OCI-LY7 (cell line): ENCODE measurements at regions of chr20 and their contacts with region 1.

Region 1: DNA sequence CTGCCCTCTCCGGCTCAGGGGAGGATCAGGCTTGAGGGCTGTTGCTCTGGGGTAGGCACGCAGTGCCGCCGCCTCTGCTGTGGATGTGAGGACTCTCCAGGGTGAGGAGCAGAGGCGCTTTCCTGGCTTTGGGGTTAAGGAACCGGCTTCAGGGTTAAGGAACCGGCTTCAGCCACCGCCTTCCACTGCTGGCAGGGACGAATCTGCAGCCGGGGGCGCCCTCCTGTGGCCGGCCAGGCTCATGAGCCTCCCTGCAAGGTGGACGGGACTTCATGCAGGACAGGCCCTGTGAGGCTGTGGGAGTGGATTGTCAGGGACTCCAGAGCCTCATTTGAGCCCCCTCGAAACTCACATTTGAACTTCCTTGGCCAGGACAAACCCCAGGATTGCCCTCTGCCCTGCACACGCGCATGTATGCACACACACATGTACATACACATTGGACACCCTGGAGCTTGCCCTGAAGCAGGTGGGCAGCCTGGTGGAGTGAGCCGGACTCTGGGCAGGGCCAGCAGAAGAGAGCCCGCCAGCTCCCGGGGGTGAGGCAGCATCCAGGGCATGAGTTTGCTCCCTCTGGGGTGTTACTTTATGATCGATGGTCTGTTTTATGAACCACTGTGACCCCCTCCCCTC is 146.8 kb downstream of the PHACTR3 start:
- DNase-seq: peak; percentile 20
- H3K4me3 ChIP-seq: no peak overlapping the region
- H3K27ac ChIP-seq: no peak overlapping the region
- H3K4me1 ChIP-seq: peaks cover 16% of the 10 kb centered on the region
- CTCF ChIP-seq: peak; percentile 75

Region 2: DNA sequence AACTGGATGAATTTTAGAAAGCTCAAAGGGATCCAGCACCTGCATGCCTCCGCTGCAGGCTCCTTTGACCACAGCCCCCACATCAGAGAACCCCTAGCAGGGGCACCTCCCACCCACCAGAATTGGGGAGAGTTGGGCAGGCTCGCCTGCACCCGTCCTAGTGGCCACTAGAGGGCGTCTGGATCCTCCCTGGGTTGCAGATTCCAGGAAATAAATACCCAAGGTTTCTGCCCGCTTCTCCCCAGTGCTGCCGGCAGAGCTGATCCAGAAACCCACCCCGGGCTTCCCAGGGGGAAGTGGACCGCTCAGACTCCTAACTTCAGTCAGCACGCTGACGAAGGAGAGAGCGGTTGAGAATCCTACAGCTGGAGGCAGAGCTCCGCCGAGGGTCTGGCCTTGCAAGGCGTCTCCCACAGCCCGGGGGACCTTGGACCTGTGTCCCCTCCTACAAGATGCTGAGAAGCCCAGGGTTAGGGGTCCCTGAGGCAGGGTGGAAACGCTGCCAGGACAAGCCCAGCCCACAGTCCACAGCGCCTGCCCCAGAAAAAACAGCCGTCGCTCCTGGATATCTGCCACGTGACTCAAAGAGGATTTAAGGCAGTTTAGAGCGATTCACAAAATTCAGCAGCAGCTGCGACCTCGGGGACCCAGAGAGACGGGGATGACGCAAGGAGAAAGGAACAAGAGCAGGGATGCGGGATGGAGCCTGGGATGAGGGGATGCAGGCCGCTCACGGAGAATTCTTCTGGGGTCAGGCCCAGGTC is 179.4 kb before region 1 on chr20:
- CTCF ChIA-PET with region 1: no interaction called
- POLR2A ChIA-PET with region 1: no interaction called
- intact Hi-C with region 1: loop called (anchors 1 kb)
- DNase-seq: peak; percentile 56
- H3K4me3 ChIP-seq: no peak overlapping the region
- H3K27ac ChIP-seq: no peak overlapping the region
- H3K4me1 ChIP-seq: no peaks in the 10 kb centered on the region
- CTCF ChIP-seq: peak; percentile 97

Region 3: DNA sequence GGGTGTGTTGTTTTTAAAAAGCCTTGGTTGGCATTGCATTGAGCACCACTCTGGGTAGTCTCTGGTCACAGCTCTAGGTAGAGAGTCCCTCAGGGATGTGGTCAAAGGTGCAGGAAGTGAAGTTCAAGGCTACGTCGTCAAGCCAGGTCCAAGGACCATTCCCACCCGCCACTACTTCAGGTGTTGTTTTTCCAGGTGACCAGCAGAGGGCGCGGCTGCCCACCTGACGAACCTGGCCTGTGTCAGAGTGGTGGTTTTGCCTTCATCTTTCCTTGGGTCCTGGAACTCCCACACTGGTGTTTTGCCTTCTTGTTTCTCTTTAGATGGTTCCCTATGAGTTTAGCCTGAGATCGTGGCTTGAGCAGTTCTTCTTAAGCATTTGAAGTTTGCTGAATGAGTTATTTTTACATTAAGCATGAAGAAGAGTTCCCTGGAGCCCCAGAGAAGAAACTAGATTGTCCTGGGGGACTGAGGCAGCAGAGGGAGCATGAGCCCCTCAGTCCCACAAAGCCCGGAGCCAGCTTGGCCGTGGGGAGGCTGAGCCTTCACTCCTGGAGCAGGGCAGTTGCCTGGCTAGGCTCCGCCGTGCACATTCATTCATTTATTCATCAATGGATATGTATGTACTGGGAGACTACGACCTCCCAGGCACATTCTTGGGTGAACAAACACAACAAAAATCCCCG is 152.4 kb before region 1 on chr20:
- CTCF ChIA-PET with region 1: no interaction called
- POLR2A ChIA-PET with region 1: no interaction called
- intact Hi-C with region 1: loop called (anchors 2 kb)
- DNase-seq: peak; percentile 47
- H3K4me3 ChIP-seq: no peak overlapping the region
- H3K27ac ChIP-seq: no peak overlapping the region
- H3K4me1 ChIP-seq: no peaks in the 10 kb centered on the region
- CTCF ChIP-seq: peak; percentile 93

Region 4: DNA sequence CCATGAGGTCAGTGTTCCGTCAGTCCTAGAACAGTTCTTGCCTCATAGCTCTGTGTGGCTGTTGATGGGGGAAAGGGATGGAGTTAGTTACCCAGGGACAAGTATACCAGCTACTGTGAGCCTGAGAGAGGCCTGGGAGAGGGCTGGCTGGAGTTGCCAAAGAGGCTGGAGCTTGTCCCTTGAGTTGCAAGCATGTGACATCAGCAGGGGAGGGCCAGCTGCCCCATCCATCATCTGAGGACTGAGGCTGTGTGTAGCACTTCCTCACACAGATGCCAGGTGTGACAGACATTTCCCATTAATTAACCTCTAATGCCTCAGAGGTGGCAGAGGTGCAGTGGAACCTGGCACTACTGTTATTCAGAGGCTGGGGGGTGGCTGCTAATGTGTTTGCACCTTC is 15.3 kb before region 1 on chr20:
- CTCF ChIA-PET with region 1: no interaction called
- POLR2A ChIA-PET with region 1: no interaction called
- intact Hi-C with region 1: no loop called
- DNase-seq: no peak
- H3K4me3 ChIP-seq: no peak overlapping the region
- H3K27ac ChIP-seq: no peak overlapping the region
- H3K4me1 ChIP-seq: no peaks in the 10 kb centered on the region
- CTCF ChIP-seq: no peak

Region 5: DNA sequence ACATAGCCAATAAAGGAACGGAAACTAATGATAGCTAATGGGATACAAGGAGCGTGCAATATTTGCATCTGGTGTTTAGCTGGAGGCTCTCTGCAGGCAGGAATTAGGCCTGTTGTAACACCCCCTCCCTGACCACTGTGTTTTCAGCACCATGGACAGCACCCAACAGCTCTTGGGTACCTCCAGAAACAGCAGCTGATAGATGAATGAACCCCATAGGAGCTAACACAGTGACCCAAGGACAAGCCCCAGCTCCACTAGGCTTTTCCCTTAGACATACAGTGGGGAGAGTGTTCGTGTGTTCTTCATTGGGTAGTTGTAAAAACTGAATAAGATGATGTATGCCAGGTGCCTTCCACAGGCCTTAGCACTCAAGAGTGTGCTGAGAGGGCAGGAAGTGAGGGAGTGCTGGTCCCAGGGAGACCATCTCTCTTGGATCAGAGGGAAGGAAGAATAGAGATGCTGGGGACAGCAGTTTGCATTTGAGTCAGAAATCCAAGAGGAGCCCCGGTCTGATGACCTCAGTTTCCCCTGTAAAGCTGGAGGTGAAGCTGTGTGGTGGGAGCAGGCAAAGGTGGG is 14.5 kb after region 1 on chr20:
- CTCF ChIA-PET with region 1: no interaction called
- POLR2A ChIA-PET with region 1: no interaction called
- intact Hi-C with region 1: no loop called
- DNase-seq: peak; percentile 29
- H3K4me3 ChIP-seq: no peak overlapping the region
- H3K27ac ChIP-seq: no peak overlapping the region
- H3K4me1 ChIP-seq: no peaks in the 10 kb centered on the region
- CTCF ChIP-seq: no peak